ENCODE measurements at regions of chr12 and their contacts with region 1.

Region 1: DNA sequence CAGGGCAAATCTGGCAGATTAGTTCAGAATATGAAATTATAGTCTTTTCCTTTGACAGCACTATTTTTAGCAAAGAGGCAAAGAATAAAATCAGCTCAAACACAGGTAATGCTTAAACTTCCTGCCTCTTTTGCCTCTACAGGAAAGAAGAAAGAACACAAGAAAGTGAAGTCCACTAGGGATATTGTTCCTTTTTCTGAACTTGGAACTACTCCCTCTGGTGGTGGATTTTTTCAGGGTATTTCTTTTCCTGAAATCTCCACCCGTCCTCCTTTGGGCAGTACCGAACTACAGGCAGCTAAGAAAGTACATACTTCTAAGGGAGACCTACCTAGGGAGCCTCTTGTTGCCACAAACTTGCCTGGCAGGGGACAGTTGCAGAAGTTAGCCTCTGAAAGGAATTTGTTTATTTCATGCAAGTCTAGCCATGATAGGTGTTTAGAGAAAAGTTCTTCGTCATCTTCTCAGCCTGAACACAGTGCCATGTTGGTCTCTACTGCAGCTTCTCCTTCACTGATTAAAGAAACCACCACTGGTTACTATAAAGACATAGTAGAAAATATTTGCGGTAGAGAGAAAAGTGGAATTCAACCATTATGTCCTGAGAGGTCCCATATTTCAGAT is 17.4 kb downstream of the TMPO start:
- DNase-seq: peak; percentile 23
- H3K4me3 ChIP-seq: no peak overlapping the region
- H3K27ac ChIP-seq: no peak overlapping the region
- H3K27me3 ChIP-seq: no peaks in the 10 kb centered on the region
- CTCF ChIP-seq: peak; percentile 68

Region 2: DNA sequence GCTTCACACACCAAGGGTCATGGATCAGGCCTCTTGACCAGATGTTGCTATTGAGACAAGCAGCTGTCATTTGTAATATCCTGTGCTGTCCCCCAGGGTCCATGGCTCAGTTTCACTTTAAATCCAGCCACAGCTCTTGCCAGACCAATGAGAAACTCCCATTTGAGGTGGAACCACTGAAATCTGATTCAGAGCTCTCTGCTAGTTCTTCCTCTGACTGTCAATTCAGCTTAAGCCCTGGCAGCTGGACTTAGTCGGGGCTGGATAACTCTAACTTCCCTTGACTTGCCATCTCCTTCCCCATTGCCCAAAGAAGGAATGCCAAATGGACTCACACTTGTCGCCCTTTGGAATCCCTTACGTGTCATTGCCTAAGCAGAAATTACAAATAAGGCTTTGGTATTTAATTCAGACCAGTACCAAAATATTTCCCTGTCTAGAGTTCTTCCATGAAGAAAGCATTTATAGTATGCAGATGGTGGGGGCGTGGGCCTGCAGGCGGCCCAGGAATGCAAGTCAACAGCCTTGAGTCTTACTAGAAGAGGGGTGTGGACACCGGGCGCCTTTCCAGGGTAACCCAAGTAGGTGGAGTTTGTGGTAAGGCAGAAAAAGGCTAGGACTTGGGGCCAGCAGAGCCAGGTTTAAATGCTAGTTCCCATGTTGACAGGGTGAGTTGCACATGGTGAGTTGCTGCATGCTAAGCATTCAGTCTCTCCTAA is 114.3 kb before region 1 on chr12:
- CTCF ChIA-PET with region 1: interaction called, 62 read pairs
- POLR2A ChIA-PET with region 1: no interaction called
- DNase-seq: peak; percentile 83
- H3K4me3 ChIP-seq: peak overlapping the region; percentile 50
- H3K27ac ChIP-seq: peak overlapping the region; percentile 80
- H3K27me3 ChIP-seq: no peaks in the 10 kb centered on the region
- CTCF ChIP-seq: no peak

Region 3: GRCh38 chr12:98516184-98516873 is 16.5 kb before region 1 on chr12:
- CTCF ChIA-PET with region 1: interaction called, 30 read pairs
- POLR2A ChIA-PET with region 1: no interaction called
- DNase-seq: peak; percentile 59
- H3K4me3 ChIP-seq: peak overlapping the region; percentile 90
- H3K27ac ChIP-seq: peak overlapping the region; percentile 31
- H3K27me3 ChIP-seq: no peaks in the 10 kb centered on the region
- CTCF ChIP-seq: peak; percentile 75

Region 4: GRCh38 chr12:98550803-98551202 is 18.0 kb after region 1 on chr12:
- CTCF ChIA-PET with region 1: interaction called, 41 read pairs
- POLR2A ChIA-PET with region 1: no interaction called
- DNase-seq: no peak
- H3K4me3 ChIP-seq: no peak overlapping the region
- H3K27ac ChIP-seq: no peak overlapping the region
- H3K27me3 ChIP-seq: no peaks in the 10 kb centered on the region
- CTCF ChIP-seq: no peak

Region 5: DNA sequence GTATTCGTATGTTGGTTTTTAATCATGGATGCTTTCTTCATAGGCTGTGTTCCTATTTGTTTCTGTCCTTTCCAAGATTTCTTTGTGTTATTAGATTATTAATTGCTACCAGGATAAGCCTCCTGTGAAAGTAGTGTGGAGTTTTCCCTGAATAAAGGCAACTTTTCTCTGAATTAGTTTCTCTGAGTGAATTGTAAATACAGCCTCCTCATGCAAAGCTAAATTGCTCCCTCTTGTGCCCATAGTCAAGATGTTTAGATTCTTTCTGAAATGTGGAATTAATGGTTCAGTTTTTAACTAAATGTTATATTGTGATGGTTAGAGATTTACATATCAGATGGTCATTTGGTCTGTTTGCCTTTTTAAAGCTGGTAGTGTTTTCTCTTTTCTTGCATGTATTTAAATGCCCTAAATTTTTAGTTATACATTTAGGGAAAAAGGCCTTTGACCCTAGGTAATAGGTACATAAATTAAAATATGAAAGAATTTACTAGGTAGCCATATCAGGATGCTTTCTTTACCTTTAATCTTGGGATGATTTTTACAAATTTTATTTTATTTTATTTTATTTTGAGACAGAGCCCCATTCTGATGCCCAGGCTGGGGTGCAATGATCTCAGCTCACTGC is 121.2 kb after region 1 on chr12:
- CTCF ChIA-PET with region 1: interaction called, 11 read pairs
- POLR2A ChIA-PET with region 1: no interaction called
- DNase-seq: peak; percentile 34
- H3K4me3 ChIP-seq: no peak overlapping the region
- H3K27ac ChIP-seq: no peak overlapping the region
- H3K27me3 ChIP-seq: no peaks in the 10 kb centered on the region
- CTCF ChIP-seq: peak; percentile 72

Measured in AG04450 (cell line).